ENCODE measurements at regions of chr5 and their contacts with region 1.

Region 1: GRCh38 chr5:36690041-36690961 is 83.9 kb downstream of the SLC1A3 start:
- DNase-seq: peak; percentile 84
- ATAC-seq: peak; percentile 83
- H3K4me3 ChIP-seq: peak overlapping the region; percentile 45 to 83 (median 70)
- H3K4me3 Mint-ChIP-seq: peak overlapping the region; percentile 94
- H3K27ac ChIP-seq: peak overlapping the region in 1 of 2 donors; percentile 55
- H3K27ac Mint-ChIP-seq: peak overlapping the region; percentile 82
- H3K4me1 ChIP-seq: peaks cover 25 to 33% of the 10 kb centered on the region in 2 donors
- H3K4me1 Mint-ChIP-seq: peaks cover 41% of the 10 kb centered on the region
- H3K27me3 ChIP-seq: no peaks in the 10 kb centered on the region
- H3K27me3 Mint-ChIP-seq: peaks cover 4% of the 10 kb centered on the region
- CTCF ChIP-seq: peak; percentile 92

Region 2: GRCh38 chr5:36151434-36152323 is 538.6 kb before region 1 on chr5 and contains the starts of genes LMBRD2 and SKP2:
- CTCF ChIA-PET with region 1: interaction called, 3 read pairs
- POLR2A ChIA-PET with region 1: no interaction called
- intact Hi-C with region 1: loop called (anchors 2 kb)
- DNase-seq: peak; percentile 96
- ATAC-seq: peak; percentile 98
- H3K4me3 ChIP-seq: peak within 1 kb of the TSS; percentile 67 to 82 (median 78)
- H3K4me3 Mint-ChIP-seq: peak within 1 kb of the TSS; percentile 95
- H3K27ac ChIP-seq: peak within 1 kb of the TSS; percentile 55 to 83
- H3K27ac Mint-ChIP-seq: peak within 1 kb of the TSS; percentile 87
- H3K4me1 ChIP-seq: peaks cover 19 to 25% of the 10 kb centered on the region in 2 donors
- H3K4me1 Mint-ChIP-seq: peaks cover 46% of the 10 kb centered on the region
- H3K27me3 ChIP-seq: no peaks in the 10 kb centered on the region
- H3K27me3 Mint-ChIP-seq: no peaks in the 10 kb centered on the region
- CTCF ChIP-seq: no peak
- total RNA-seq, gene LMBRD2: 9.9 and 10.0 TPM in 2 replicates
- total RNA-seq, gene SKP2: 26.7 and 33.0 TPM in 2 replicates

Region 3: GRCh38 chr5:36414869-36415282 is 275.4 kb before region 1 on chr5:
- CTCF ChIA-PET with region 1: interaction called, 9 read pairs
- POLR2A ChIA-PET with region 1: no interaction called
- intact Hi-C with region 1: loop called (anchors 2 kb)
- DNase-seq: no peak
- ATAC-seq: no peak
- H3K4me3 ChIP-seq: no peak overlapping the region
- H3K4me3 Mint-ChIP-seq: no peak overlapping the region
- H3K27ac ChIP-seq: no peak overlapping the region
- H3K27ac Mint-ChIP-seq: no peak overlapping the region
- H3K4me1 ChIP-seq: no peaks in the 10 kb centered on the region
- H3K4me1 Mint-ChIP-seq: peaks cover 7% of the 10 kb centered on the region
- H3K27me3 ChIP-seq: no peaks in the 10 kb centered on the region
- H3K27me3 Mint-ChIP-seq: peaks cover 4% of the 10 kb centered on the region
- CTCF ChIP-seq: no peak

Region 4: DNA sequence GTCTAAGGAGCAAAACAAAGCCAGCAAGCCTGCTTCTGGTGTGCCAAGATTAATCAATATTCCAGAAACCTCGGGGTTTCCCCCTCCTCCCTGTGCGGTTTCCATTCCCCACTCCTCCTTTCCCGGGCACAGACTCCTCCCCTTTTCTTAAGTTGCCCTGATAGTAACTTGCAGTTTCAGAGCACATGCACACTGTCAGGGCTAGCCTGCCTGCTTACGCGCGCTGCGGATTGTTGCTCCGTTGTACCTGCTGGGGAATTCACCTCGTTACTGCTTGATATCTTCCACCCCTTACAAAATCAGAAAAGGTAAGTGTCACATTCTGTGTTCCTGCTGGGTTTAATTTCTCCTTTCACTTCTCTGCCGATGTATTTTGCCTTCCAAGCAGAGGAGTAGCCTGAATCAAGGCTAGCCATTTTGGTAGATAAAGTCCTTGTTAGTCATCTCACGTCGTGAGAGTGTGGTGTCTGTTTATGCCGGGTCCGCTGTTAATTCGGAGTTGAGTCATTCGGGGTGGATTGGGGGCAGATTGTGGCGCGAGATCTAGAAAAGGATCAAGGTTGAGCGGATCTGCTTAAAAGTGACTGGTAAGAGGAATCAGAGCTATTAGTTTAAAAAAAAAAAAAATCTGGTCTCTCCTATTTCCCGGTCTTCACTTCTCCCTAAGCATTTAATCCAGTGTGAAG is 83.7 kb before region 1 on chr5 and contains the start of gene SLC1A3:
- CTCF ChIA-PET with region 1: no interaction called
- POLR2A ChIA-PET with region 1: no interaction called
- intact Hi-C with region 1: no loop called
- DNase-seq: peak; percentile 49
- ATAC-seq: peak; percentile 61
- H3K4me3 ChIP-seq: peak within 1 kb of the TSS; percentile 16 to 91 (median 51)
- H3K4me3 Mint-ChIP-seq: peak within 1 kb of the TSS; percentile 87
- H3K27ac ChIP-seq: no peak within 1 kb of the TSS
- H3K27ac Mint-ChIP-seq: no peak within 1 kb of the TSS
- H3K4me1 ChIP-seq: peaks cover 14 to 16% of the 10 kb centered on the region in 2 donors
- H3K4me1 Mint-ChIP-seq: peaks cover 15% of the 10 kb centered on the region
- H3K27me3 ChIP-seq: peaks cover 0 to 36% (median 26%) of the 10 kb centered on the region in 4 experiments
- H3K27me3 Mint-ChIP-seq: peaks cover 68% of the 10 kb centered on the region
- CTCF ChIP-seq: no peak
- total RNA-seq, gene SLC1A3: 0.37 TPM in 1 of 2 replicates, not detected in the other

Region 5: DNA sequence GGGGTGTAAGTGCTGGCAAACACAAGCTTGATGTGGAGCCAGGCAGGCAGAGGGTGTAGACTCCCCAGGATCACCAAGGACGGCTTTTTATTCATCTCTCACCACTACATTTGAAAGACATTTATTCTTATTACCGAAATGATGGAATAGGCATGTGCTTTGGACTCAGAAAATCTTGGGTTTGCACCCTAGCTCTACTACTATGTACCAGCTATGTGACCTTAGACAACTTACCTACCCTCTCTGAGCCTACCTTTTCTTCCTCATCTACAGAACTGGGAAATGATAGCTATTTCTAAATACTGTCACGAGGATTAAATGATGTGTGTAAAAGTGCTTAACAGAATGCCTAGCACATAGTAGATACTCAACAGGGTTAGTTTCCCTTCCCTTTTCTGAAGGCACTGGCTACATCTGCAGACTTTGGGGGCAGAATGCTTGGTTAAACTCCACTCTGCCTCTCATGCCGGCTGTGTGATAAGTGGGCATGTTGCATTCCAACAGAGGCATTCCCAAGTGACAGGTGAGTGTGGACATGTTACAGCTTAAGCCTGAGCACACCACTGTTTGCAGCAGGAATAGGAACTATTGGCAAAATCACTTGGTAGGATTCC is 10.9 kb after region 1 on chr5:
- CTCF ChIA-PET with region 1: interaction called, 58 read pairs
- POLR2A ChIA-PET with region 1: no interaction called
- intact Hi-C with region 1: loop called (anchors 1 kb)
- DNase-seq: peak; percentile 81
- ATAC-seq: peak; percentile 99
- H3K4me3 ChIP-seq: peak overlapping the region in 1 of 5 experiments; percentile 12
- H3K4me3 Mint-ChIP-seq: peak overlapping the region; percentile 69
- H3K27ac ChIP-seq: peak overlapping the region; percentile 27 to 37
- H3K27ac Mint-ChIP-seq: peak overlapping the region; percentile 86
- H3K4me1 ChIP-seq: peaks cover 23 to 25% of the 10 kb centered on the region in 2 donors
- H3K4me1 Mint-ChIP-seq: peaks cover 28% of the 10 kb centered on the region
- H3K27me3 ChIP-seq: no peaks in the 10 kb centered on the region
- H3K27me3 Mint-ChIP-seq: no peaks in the 10 kb centered on the region
- CTCF ChIP-seq: no peak

Measured in B cell (primary cell).